ENCODE measurements at regions of chr22 and their contacts with region 1.

Region 1: GRCh38 chr22:33952776-33953175 is 32.5 kb upstream of the LARGE1 start:
- DNase-seq: no peak
- H3K4me3 ChIP-seq: no peak overlapping the region
- H3K27ac ChIP-seq: no peak overlapping the region
- H3K4me1 ChIP-seq: no peaks in the 10 kb centered on the region
- H3K27me3 ChIP-seq: no peaks in the 10 kb centered on the region
- CTCF ChIP-seq: no peak

Region 2: DNA sequence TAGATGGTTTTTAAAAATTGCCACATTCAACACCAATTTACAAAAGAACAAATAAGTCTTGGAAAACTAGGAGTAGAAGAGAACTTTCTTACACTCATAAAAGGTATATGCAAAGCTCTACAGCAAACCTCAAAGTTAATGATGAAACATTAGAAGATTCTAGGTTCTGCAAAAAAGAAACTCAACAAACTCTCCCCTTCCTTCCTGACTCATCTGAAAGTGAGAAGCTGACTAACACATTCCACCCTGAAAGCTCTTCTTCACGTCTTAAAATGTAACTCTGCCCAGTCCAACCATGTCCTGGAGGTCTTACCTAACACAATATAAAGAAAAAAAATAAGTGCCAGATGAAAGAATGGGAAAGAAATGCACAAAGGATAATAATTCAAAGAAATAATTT is 894.3 kb after region 1 on chr22:
- CTCF ChIA-PET with region 1: interaction called, 16 read pairs
- dilution Hi-C with region 1: no loop called
- in situ Hi-C with region 1: no loop called
- intact Hi-C with region 1: no loop called
- DNase-seq: peak; percentile 73
- H3K4me3 ChIP-seq: no peak overlapping the region
- H3K27ac ChIP-seq: no peak overlapping the region
- H3K4me1 ChIP-seq: no peaks in the 10 kb centered on the region
- H3K27me3 ChIP-seq: no peaks in the 10 kb centered on the region
- CTCF ChIP-seq: no peak

Measured in mammary epithelial cell (primary cell).